Right cardiac atrium (tissue), 5 donors: ENCODE measurements at regions of chr1 and their contacts with region 1.

Region 1: GRCh38 chr1:110495926-110496600 is 22.9 kb downstream of the KCNA10 start:
- DNase-seq: peak; percentile 72 to 89 (median 79)
- ATAC-seq: peak; percentile 76 to 82
- H3K4me3 ChIP-seq: no peak overlapping the region
- H3K27ac ChIP-seq: no peak overlapping the region
- H3K4me1 ChIP-seq: no peaks in the 10 kb centered on the region
- H3K27me3 ChIP-seq: no peaks in the 10 kb centered on the region

Region 2: DNA sequence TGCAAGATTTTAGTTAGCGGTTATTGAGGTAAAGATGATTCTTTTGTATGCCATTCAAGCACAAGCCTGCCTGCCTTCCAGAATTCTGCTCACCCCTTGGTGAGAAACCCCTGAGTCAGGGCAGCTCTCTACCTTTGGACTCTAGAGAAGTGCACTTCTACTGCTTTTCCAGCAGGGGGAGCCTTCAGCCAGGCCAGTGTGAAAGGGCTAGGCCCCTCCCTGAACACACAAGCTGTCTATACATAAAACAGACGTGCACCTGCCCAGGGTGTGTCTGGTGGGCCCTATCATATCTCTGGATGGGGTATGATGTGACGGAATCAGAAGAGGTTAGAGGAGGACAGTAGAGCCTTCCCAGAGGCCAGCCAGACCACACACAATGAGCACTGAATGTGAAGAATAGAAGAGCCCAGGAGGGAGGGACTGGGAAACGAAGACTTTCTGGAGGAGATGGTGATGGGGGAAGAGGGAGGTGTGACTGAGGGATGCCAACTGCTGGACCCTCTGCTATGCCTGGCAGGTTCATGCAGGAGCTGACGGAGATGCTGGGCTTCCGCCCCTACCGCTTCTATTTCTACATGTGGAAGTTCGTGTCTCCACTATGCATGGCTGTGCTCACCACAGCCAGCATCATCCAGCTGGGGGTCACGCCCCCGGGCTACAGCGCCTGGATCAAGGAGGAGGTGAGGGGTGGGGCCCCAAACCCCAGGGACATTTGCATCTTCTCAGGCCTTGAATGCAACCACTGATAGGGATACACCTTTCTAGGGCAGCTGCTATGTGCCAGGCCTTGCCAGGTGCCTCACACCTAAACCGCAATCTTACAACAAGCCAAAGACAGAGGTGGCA is 298.9 kb before region 1 on chr1:
- intact Hi-C with region 1: loop called in 2 of 4 experiments (anchors 10 kb)
- DNase-seq: no peak
- ATAC-seq: peak; percentile 7 to 56
- H3K4me3 ChIP-seq: no peak overlapping the region
- H3K27ac ChIP-seq: no peak overlapping the region
- H3K4me1 ChIP-seq: no peaks in the 10 kb centered on the region
- H3K27me3 ChIP-seq: no peaks in the 10 kb centered on the region